ENCODE measurements at regions of chr2 and their contacts with region 1.

Region 1: DNA sequence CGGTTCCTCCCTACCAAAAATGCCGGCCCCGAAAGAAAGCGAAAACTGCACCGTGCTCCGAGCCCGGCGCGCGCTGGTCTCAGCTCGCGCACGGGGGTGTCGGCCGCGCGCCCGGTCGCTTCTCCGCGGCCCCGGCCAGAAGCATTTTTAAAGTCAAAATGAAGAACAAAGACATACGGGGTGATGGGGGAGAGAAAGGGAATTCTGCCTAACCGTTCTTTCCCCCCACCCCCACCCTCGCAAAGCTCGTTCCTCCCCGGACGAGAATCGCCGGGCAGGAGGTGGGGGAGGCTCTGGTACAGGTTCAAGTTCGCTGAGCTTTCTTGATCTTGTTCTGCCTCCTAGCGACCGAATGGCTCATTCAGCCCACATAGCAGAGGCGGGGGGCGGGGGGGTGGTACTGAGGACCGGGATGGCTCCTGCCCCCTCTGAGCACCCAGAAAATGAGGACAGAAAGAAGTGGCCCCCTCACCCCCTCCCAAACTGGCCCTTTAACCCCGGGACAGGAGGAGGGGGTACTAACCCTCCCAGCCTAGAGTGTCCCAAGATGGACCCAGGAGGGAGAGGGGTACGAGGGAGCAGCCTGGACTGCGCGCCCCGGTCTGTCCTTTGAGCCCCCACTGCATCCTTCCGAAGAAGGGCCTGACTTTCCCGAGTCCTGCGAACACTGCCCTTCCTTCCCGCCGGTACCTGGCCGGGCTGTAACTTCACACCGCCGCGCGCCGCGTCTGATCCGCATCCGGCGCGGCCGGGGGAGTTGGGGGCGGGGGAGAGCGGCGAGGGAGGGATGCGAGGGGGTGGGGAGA is 3.1 kb downstream of the BCL11A start:
- DNase-seq: no peak
- H3K4me3 ChIP-seq: peak overlapping the region; percentile 85
- H3K27me3 ChIP-seq: no peaks in the 10 kb centered on the region
- CTCF ChIP-seq: peak; percentile 85

Region 2: DNA sequence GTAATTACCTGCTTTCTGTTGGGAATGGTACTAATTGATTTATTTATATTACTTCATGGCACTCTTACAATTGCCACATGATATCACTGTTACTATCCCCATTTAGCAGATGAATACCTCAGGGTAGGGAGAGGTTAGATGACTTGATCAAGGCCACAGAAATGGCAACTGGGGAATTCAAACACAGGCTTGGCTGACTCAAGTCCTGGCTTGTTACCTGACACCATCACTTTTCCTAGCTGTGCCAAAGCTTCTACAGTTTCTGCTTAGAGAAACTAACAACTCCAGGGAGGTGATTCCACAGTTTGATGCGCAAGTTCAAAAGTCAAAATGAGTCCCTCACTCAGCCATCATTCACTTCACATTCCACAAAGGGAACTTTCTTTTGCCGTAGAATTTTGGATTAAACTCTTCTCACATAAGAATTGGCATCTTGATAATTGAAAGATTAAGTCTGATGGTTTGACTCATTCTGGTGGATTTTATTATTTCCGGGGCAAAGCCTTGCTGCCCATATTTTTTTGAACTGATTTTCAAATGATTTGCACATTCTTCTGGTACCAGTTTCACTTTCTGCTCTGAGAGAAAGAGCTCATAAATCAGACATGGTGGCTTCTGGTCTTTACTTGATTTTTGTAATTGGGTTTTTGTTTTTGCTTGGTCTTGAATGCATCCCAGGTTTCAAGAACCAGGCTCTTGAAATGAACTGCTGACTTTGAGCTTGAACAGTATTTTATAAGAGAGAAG is 653.7 kb before region 1 on chr2:
- CTCF ChIA-PET with region 1: no interaction called
- POLR2A ChIA-PET with region 1: no interaction called
- DNase-seq: no peak
- H3K4me3 ChIP-seq: no peak overlapping the region
- H3K27me3 ChIP-seq: no peaks in the 10 kb centered on the region
- CTCF ChIP-seq: no peak

Region 3: DNA sequence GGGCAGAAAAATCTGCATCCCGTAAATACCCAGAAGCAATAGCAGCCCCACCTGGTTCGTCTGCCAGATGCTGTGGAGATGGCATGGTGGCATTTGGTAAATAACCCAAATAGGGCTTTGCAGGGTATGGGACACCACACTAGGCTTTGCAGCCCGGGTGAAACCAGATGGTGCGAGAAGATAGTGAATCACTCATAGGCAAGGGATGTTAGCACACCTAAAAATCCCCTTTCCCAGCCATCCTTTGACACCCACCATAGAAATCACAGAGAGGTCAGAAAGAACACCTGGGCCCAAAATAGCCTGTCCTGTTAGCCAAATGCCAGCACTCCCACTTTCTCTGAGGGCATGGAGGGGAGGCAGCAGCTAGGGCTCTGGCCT is 44.5 kb before region 1 on chr2:
- CTCF ChIA-PET with region 1: interaction called, 19 read pairs
- POLR2A ChIA-PET with region 1: no interaction called
- DNase-seq: no peak
- H3K4me3 ChIP-seq: no peak overlapping the region
- H3K27me3 ChIP-seq: no peaks in the 10 kb centered on the region
- CTCF ChIP-seq: no peak

Region 4: DNA sequence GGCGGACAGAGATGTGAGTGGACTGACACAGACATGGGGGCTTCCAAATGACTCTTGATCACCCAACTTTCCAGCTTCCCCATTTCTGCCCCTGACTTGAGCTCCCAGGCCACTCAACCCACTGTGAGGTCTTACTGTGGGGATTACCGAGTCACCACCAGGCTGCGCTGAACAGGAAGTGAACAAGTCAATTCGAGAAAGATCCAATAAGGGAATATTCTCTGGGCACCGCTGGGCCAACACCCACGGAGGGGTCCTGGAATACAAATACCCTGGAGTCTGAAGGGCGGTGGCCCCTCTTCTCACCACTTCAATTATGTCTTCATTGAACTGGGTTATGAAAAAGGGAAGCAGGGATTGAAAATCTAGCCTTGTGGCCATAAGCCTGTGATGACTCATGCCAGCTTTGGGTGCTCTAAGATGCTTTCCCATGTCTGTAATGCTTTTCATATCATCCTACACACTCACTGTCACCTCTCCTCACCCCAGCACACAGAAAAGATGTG is 34.6 kb before region 1 on chr2:
- CTCF ChIA-PET with region 1: interaction called, 17 read pairs
- POLR2A ChIA-PET with region 1: no interaction called
- DNase-seq: peak; percentile 49
- H3K4me3 ChIP-seq: no peak overlapping the region
- H3K27me3 ChIP-seq: no peaks in the 10 kb centered on the region
- CTCF ChIP-seq: peak; percentile 26; the same call in 1 of the 2 replicates

Region 5: GRCh38 chr2:60540074-60540473 is 10.3 kb before region 1 on chr2:
- CTCF ChIA-PET with region 1: interaction called, 15 read pairs
- POLR2A ChIA-PET with region 1: interaction called, 17 read pairs
- DNase-seq: no peak
- H3K4me3 ChIP-seq: no peak overlapping the region
- H3K27me3 ChIP-seq: no peaks in the 10 kb centered on the region
- CTCF ChIP-seq: no peak

Region 6: GRCh38 chr2:60560734-60561644 is 10.6 kb after region 1 on chr2:
- CTCF ChIA-PET with region 1: interaction called, 16 read pairs
- POLR2A ChIA-PET with region 1: interaction called, 3 read pairs
- DNase-seq: no peak
- H3K4me3 ChIP-seq: no peak overlapping the region
- H3K27me3 ChIP-seq: peaks cover 17% of the 10 kb centered on the region
- CTCF ChIP-seq: peak; percentile 56